Endothelial cell of umbilical vein (primary cell): ENCODE measurements at regions of chr3 and their contacts with region 1.

Region 1: DNA sequence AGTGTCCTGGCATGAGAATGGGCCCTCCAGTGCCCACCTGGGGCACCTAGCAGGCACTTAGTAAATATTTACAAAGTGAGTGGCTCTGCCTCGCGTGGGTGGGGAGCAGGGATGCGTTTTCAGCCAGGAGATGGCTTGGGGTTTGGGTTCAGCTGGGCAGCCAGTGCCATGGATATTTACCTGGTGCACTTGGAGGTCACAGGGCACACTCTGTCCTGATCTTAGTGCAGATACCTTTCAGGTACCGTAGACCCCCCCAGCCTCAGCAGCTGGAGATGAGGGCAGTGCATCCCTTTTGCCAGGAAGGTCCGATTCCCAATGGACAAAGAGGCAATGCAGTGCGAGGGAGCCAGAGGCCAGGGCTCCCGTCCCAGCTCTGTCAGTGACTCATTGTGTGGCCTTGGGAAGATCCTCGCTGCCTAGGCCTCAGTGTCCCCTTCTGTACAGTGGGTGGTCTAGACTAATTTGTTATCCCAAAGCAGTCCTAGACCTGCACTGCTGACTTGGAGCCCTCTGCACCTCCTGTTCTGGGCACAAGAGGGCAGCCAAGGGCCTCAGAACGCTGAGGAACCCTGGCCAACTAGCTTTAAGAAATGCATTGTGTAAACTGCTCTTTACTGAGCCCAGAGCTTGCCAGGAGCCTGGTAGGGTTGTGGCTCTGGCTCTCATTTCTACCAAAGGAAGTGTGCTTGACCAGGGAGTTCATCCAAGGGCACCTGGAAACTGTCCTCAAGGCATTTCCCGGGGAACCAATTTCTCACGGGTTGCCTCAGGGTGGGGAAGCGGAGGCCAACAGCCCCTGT is 16.0 kb downstream of the HDAC11 start:
- DNase-seq: peak; percentile 73
- H3K4me3 ChIP-seq: no peak overlapping the region
- H3K27ac ChIP-seq: no peak overlapping the region
- H3K4me1 ChIP-seq: no peaks in the 10 kb centered on the region
- H3K27me3 ChIP-seq: no peaks in the 10 kb centered on the region
- CTCF ChIP-seq: peak; percentile 87 to 89
- POLR2A ChIP-seq: no peak

Region 2: GRCh38 chr3:13379201-13379830 is 116.8 kb before region 1 on chr3:
- CTCF ChIA-PET with region 1: no interaction called
- POLR2A ChIA-PET with region 1: no interaction called
- dilution Hi-C with region 1: no loop called
- intact Hi-C with region 1: no loop called
- DNase-seq: no peak
- H3K4me3 ChIP-seq: no peak overlapping the region
- H3K27ac ChIP-seq: no peak overlapping the region
- H3K4me1 ChIP-seq: no peaks in the 10 kb centered on the region
- H3K27me3 ChIP-seq: no peaks in the 10 kb centered on the region
- CTCF ChIP-seq: no peak
- POLR2A ChIP-seq: no peak

Region 3: GRCh38 chr3:13507769-13508339 is 11.7 kb after region 1 on chr3:
- CTCF ChIA-PET with region 1: interaction called, 15 read pairs
- POLR2A ChIA-PET with region 1: no interaction called
- dilution Hi-C with region 1: no loop called
- intact Hi-C with region 1: no loop called
- DNase-seq: no peak
- H3K4me3 ChIP-seq: no peak overlapping the region
- H3K27ac ChIP-seq: no peak overlapping the region
- H3K4me1 ChIP-seq: no peaks in the 10 kb centered on the region
- H3K27me3 ChIP-seq: no peaks in the 10 kb centered on the region
- CTCF ChIP-seq: no peak
- POLR2A ChIP-seq: no peak